ENCODE measurements at regions of chr14 and their contacts with region 1.

Region 1: GRCh38 chr14:74913986-74914573 is 9.0 kb downstream of the RPS6KL1 start:
- DNase-seq: peak; percentile 74
- H3K4me3 ChIP-seq: no peak overlapping the region
- H3K27ac ChIP-seq: peak overlapping the region; percentile 93
- H3K4me1 ChIP-seq: peaks cover 66% of the 10 kb centered on the region
- H3K27me3 ChIP-seq: no peaks in the 10 kb centered on the region
- CTCF ChIP-seq: peak; percentile 89

Region 2: GRCh38 chr14:74705613-74706500 is 208.2 kb before region 1 on chr14:
- intact Hi-C with region 1: no loop called
- DNase-seq: no peak
- H3K4me3 ChIP-seq: no peak overlapping the region
- H3K27ac ChIP-seq: no peak overlapping the region
- H3K4me1 ChIP-seq: peaks cover 30% of the 10 kb centered on the region
- H3K27me3 ChIP-seq: no peaks in the 10 kb centered on the region
- CTCF ChIP-seq: no peak

Region 3: GRCh38 chr14:74955229-74956026 is 41.3 kb after region 1 on chr14 and contains the start of gene PGF:
- intact Hi-C with region 1: no loop called
- DNase-seq: peak; percentile 75
- H3K4me3 ChIP-seq: peak within 1 kb of the TSS; percentile 77
- H3K27ac ChIP-seq: peak within 1 kb of the TSS; percentile 75
- H3K4me1 ChIP-seq: peaks cover 58% of the 10 kb centered on the region
- H3K27me3 ChIP-seq: no peaks in the 10 kb centered on the region
- CTCF ChIP-seq: no peak
- total RNA-seq, gene PGF: 4.2 TPM

Region 4: GRCh38 chr14:75088574-75089373 is 174.7 kb after region 1 on chr14:
- intact Hi-C with region 1: loop called (anchors 10 kb)
- DNase-seq: no peak
- H3K4me3 ChIP-seq: no peak overlapping the region
- H3K27ac ChIP-seq: no peak overlapping the region
- H3K4me1 ChIP-seq: no peaks in the 10 kb centered on the region
- H3K27me3 ChIP-seq: no peaks in the 10 kb centered on the region
- CTCF ChIP-seq: peak; percentile 83

Region 5: DNA sequence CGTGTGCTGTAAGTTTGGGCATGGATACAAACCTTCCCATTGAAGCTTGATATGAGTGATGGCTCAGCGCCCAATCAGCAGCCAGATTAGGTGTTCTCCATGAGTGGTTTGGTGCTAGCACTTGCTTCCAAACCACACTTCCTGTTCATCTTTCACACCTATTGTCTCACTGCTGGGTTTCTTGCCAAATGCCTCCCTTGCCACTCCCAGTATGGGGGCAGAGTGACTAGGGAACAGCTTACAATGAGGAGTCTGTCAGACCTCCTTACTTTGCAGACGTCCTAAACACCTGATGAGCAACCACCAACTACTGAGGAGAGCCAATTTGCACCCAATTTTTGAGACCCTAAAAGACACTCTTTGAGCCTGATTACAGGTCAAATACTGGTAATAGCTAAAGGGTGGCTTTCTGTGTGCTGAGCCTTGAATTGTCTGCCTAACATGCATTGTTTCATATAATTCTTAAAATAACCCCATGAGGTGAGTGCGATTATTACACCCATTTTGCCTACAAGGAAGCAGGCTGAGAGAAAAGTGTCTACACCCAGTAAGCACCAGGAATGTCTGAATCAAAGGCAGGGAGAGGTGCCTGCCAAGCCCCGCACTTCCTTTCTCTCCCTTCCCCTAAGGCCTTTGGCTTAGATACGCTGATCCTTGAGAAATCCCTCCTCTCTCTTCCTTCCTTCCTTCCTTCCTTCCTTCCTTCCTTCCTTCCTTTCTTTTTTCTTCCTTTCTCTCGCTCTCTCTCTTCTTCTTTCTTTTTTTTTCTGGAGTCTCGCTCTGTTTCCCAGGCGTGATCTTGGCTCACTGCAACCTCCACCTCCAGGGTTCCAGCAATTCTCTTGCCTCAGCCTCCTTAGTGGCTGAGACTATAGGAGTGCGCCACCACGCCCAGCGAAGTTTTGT is 316.3 kb after region 1 on chr14:
- intact Hi-C with region 1: no loop called
- DNase-seq: peak; percentile 71
- H3K4me3 ChIP-seq: no peak overlapping the region
- H3K27ac ChIP-seq: peak overlapping the region; percentile 59
- H3K4me1 ChIP-seq: peaks cover 17% of the 10 kb centered on the region
- H3K27me3 ChIP-seq: no peaks in the 10 kb centered on the region
- CTCF ChIP-seq: no peak

Measured in left ventricle myocardium inferior (tissue), 1 donor.